ENCODE measurements at regions of chr20 and their contacts with region 1.

Region 1: GRCh38 chr20:22453239-22454080 is 130.9 kb downstream of the FOXA2 start:
- DNase-seq: no peak
- ATAC-seq: no peak
- H3K4me3 ChIP-seq: no peak overlapping the region
- H3K27ac ChIP-seq: no peak overlapping the region
- H3K4me1 ChIP-seq: no peaks in the 10 kb centered on the region
- H3K27me3 ChIP-seq: peaks cover 2 to 4% (median 2%) of the 10 kb centered on the region in 3 donors
- CTCF ChIP-seq: peak; percentile 46

Region 2: GRCh38 chr20:22385602-22386305 is 67.7 kb before region 1 on chr20:
- intact Hi-C with region 1: no loop called
- DNase-seq: no peak
- ATAC-seq: no peak
- H3K4me3 ChIP-seq: no peak overlapping the region
- H3K27ac ChIP-seq: no peak overlapping the region
- H3K4me1 ChIP-seq: no peaks in the 10 kb centered on the region
- H3K27me3 ChIP-seq: peaks cover 0 to 3% (median 0%) of the 10 kb centered on the region in 3 donors
- CTCF ChIP-seq: no peak

Region 3: DNA sequence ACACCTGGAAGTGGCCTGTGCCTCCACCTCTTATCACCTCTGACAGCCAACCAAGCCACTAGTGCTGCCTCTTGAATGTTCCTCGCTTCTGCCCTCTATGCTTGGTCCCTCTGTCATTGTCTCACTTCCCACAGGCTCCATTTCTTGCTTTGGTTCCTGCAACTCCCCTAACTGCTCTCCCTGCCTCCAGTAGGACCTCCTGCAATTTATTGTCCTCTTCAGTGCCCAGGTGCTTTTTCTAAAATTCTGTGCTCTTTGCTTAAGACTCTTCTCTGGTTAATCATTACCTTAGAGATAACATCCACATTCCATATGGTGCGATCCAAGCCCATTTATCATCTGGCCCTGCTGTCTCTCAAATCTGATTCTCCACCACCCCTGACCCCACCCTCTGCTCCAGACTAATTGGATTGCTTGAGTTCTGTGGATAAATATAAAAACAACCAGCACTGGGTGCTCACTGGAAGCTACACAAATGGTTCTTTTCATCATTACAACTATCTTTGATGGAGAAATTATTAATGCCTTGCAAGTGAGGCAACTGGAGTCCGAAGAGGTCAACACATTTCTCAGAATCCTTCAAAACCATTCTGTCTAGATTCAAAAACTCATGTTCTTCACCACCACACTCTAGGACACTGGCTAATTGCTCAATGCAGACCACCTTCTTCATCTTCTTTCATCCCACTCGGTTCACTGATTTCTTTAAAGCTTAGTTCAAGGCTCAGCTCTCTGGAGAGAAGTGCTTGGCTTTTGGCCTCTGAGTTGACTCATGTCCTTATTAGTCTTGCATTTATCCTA is 83.7 kb after region 1 on chr20:
- intact Hi-C with region 1: no loop called
- DNase-seq: no peak
- ATAC-seq: no peak
- H3K4me3 ChIP-seq: no peak overlapping the region
- H3K27ac ChIP-seq: no peak overlapping the region
- H3K4me1 ChIP-seq: no peaks in the 10 kb centered on the region
- H3K27me3 ChIP-seq: peaks cover 0 to 3% (median 0%) of the 10 kb centered on the region in 3 donors
- CTCF ChIP-seq: no peak

Region 4: DNA sequence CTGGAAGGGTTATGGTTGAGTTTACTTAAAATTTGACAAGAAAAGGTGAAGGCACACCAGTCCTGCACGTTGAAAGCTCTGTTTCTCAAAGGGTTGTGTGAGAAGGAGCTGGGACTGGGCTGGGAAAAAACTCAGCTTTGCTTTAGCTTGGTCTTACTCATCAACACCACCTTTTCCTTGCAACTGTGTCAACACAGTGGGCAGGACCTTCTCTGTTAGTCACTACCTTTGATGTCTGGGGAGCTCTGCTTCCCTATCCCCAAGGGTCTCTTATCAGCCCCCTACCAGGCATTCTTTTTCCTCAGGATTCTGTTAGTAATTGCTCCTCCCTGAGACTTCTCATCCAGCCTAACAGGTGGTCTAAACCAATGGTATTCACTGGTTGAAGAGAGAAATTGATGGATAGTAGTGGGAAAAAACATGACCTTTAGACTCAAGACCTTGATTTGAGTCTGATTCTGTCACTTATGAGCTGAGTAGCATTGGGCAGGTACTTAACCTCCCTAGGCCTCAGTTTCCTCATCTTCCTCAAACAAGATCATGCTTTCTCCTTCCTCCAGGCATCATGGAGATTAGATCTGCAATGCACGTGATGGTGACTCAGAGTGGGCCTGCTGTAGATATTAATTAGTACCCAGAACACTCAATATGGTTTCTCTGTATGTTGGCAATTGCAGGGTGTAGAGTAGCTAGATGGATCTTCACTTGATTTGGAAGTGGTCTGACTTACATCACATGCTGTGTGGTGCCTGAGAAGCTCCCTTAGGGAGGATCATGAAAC is 148.1 kb after region 1 on chr20:
- intact Hi-C with region 1: no loop called
- DNase-seq: no peak
- ATAC-seq: no peak
- H3K4me3 ChIP-seq: no peak overlapping the region
- H3K27ac ChIP-seq: no peak overlapping the region
- H3K4me1 ChIP-seq: no peaks in the 10 kb centered on the region
- H3K27me3 ChIP-seq: peaks cover 3 to 21% (median 8%) of the 10 kb centered on the region in 3 donors
- CTCF ChIP-seq: no peak

Region 5: GRCh38 chr20:22684072-22684762 is 230.8 kb after region 1 on chr20:
- intact Hi-C with region 1: loop called in 1 of 2 experiments (anchors 10 kb)
- DNase-seq: peak; percentile 37 to 69
- ATAC-seq: peak; percentile 77 to 92 (median 84)
- H3K4me3 ChIP-seq: no peak overlapping the region
- H3K27ac ChIP-seq: no peak overlapping the region
- H3K4me1 ChIP-seq: no peaks in the 10 kb centered on the region
- H3K27me3 ChIP-seq: no peaks in the 10 kb centered on the region
- CTCF ChIP-seq: peak; percentile 79

Measured in psoas muscle (tissue), 8 donors.